PC-9 (cell line): ENCODE measurements at regions of chr19 and their contacts with region 1.

Region 1: DNA sequence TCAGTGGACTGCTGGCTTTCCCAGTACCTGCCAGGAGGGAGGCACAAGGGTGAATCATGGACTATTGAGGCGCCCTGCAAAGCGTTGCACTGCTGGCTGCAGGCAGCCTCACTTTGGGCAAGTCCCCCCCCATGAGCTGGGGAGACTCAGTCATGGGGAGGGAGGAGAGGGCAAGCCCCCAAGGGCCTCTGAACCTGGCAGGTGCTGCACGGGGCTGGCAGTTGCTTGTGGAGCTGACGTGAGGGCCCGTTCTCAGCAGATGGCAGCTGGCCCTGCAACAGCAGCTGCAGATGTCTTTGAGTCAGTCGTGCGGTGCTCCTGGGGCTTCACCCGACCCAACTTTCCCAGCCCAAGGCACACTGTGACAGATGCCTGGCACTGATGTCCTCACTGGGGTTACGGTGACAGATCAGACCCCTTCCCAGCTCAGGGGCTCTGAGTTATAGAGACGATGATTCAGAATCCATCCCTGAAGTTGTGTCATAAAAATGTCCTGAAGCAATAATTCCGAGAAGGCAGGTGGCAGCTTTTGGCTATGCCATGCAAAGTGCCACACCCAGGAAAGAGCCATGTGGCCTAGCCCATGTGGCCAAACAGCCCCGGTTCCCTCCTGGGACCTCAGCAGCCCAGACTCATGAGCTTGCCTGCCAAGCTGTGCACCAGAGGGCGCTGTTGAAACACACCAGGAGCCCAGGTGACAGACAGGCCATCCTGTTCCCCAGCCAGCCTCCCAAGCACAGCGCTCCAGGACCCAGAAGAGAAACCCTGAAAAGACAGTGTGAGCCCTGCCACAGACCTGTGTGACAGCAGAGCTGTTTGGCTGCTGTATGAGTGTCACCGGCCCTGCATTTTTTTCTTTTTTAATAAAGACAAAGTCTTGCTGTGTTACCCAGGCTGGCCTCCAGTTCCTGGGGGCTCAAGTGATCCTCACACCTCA is 53.6 kb upstream of the LDLR start:
- DNase-seq: peak; percentile 94 to 96
- H3K4me3 ChIP-seq: no peak overlapping the region
- H3K27ac ChIP-seq: peak overlapping the region; percentile 28
- H3K4me1 ChIP-seq: peaks cover 11% of the 10 kb centered on the region
- H3K27me3 ChIP-seq: no peaks in the 10 kb centered on the region
- CTCF ChIP-seq: peak; percentile 96

Region 2: DNA sequence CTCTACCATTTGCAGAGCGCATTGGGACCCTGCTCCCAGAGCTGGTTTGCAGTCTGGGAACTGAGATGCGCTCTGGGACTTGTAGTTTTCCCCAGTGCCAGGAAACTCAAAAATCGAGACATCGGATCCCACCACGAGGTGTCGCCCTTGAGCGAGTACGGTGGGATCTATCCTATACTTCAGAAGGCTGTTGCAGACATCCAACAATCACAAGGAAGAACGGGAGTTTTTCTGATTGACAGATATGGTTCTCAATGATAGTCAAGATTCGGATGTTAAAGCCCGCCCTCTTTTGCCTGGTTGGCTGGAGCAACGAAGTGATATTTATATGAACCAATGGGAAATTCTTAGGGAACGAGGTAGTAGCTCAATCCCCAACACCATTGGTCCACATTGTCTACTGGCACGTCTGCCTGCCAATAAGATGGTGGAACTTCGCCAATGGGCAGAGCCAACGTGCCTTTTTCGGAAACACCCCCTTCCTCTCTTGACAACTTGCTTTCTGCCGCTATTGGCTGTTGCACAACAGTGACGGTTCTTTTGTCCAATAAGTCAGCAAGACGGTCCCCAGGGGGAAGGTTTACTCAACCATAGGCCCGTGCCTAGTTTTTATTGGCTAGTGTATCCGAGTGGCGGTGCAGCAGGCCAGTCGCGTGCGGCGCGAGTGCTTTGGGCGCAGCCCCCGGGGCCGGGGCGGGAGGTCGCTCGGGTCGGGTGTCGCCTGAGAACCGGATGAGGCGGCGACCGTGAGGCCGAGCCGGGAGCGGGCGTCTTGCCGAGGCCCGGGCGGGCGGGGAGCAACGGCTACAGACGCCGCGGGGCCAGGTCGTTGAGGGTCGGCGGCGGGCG is 318.1 kb before region 1 on chr19 and contains the start of gene DNM2:
- CTCF ChIA-PET with region 1: no interaction called
- POLR2A ChIA-PET with region 1: no interaction called
- intact Hi-C with region 1: no loop called
- DNase-seq: peak; percentile 99 to 100
- H3K4me3 ChIP-seq: peak within 1 kb of the TSS; percentile 95
- H3K27ac ChIP-seq: no peak within 1 kb of the TSS
- H3K4me1 ChIP-seq: peaks cover 12% of the 10 kb centered on the region
- H3K27me3 ChIP-seq: no peaks in the 10 kb centered on the region
- CTCF ChIP-seq: peak; percentile 87
- total RNA-seq, gene DNM2: 169 and 188 TPM in 2 replicates

Region 3: GRCh38 chr19:11018179-11018578 is 17.5 kb before region 1 on chr19:
- CTCF ChIA-PET with region 1: no interaction called
- POLR2A ChIA-PET with region 1: no interaction called
- intact Hi-C with region 1: loop called (anchors 1 kb)
- DNase-seq: peak; percentile 47 to 86
- H3K4me3 ChIP-seq: no peak overlapping the region
- H3K27ac ChIP-seq: no peak overlapping the region
- H3K4me1 ChIP-seq: no peaks in the 10 kb centered on the region
- H3K27me3 ChIP-seq: no peaks in the 10 kb centered on the region
- CTCF ChIP-seq: no peak

Region 4: GRCh38 chr19:11079999-11080398 is 44.3 kb after region 1 on chr19:
- CTCF ChIA-PET with region 1: no interaction called
- POLR2A ChIA-PET with region 1: no interaction called
- intact Hi-C with region 1: no loop called
- DNase-seq: no peak
- H3K4me3 ChIP-seq: no peak overlapping the region
- H3K27ac ChIP-seq: no peak overlapping the region
- H3K4me1 ChIP-seq: peaks cover 15% of the 10 kb centered on the region
- H3K27me3 ChIP-seq: no peaks in the 10 kb centered on the region
- CTCF ChIP-seq: no peak

Region 5: DNA sequence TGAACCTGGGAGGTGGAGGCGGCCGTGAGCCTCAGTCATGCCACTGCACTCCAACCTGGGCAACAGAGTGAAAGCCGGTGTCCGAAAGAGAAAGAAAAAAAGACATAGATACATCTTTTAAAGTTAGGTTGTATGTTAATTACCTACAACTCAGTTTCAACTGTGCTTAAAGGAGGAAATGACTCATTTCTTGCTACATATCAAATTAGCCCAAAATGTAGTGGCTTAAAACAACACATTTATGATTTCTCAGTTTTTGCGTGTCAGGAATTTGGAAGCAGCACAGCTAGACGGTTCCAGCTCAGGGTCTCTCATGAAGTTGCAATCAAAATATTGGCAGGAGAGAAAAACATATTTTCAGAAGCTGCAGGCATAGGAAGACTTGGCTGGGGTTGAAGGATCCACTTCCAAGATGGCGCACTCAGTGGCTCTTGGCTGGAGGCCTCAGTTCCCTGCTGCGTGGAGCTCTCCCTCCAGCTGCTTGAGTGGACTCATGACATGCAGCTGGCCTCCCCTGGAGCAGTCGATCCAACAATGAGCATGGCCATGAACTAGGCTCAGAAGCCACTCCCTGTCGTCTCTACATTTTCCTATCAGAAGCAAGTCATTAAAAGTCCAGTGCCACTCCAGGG is 60.6 kb after region 1 on chr19:
- CTCF ChIA-PET with region 1: interaction called, 16 read pairs
- POLR2A ChIA-PET with region 1: interaction called, 3 read pairs
- intact Hi-C with region 1: loop called (anchors 1 kb)
- DNase-seq: peak in 1 of 2 experiments; percentile 58
- H3K4me3 ChIP-seq: no peak overlapping the region; the same call in 1 of the 2 replicates
- H3K27ac ChIP-seq: peak overlapping the region; percentile 98
- H3K4me1 ChIP-seq: peaks cover 55% of the 10 kb centered on the region
- H3K27me3 ChIP-seq: no peaks in the 10 kb centered on the region
- CTCF ChIP-seq: no peak

Region 6: DNA sequence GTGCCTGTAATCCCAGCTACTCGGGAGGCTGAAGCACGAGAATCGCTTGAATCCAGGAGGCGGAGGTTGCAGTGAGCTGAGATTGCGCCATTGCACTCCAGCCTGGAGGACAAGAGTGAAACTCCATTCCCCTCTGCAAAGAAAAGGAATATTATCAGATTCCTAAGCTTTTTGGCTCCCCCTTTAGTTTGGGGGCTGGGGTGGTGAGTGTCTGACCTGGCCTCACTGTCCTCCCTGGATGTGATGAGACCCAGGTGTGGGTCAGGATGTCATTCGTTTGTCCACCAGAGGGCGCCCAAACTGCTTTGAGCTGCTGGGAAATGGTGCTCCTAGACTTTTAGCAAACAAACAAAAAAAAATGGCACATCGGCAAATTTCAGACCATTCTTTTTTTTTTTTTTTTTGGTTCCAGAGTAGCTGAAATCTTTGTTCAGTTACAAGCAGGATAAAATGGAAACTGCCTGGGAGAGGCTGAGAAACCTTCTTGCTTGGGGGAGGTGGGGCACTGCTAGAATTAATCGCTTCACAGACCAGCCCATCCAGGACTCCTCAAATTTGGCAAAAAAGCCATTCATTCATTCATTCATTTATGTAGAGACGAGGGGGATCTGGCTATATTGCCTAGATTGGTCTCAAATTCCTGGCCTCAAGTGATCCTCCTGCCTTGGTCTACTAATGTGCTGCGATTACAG is 90.4 kb after region 1 on chr19:
- CTCF ChIA-PET with region 1: no interaction called
- POLR2A ChIA-PET with region 1: interaction called, 4 read pairs
- intact Hi-C with region 1: loop called (anchors 2 kb)
- DNase-seq: peak; percentile 64 to 72
- H3K4me3 ChIP-seq: no peak overlapping the region
- H3K27ac ChIP-seq: no peak overlapping the region
- H3K4me1 ChIP-seq: no peaks in the 10 kb centered on the region
- H3K27me3 ChIP-seq: no peaks in the 10 kb centered on the region
- CTCF ChIP-seq: peak; percentile 88

Region 7: GRCh38 chr19:11203194-11204075 is 167.7 kb after region 1 on chr19:
- CTCF ChIA-PET with region 1: interaction called, 9 read pairs
- POLR2A ChIA-PET with region 1: no interaction called
- intact Hi-C with region 1: loop called (anchors 1 kb)
- DNase-seq: peak; percentile 69 to 75
- H3K4me3 ChIP-seq: no peak overlapping the region
- H3K27ac ChIP-seq: no peak overlapping the region
- H3K4me1 ChIP-seq: peaks cover 18% of the 10 kb centered on the region
- H3K27me3 ChIP-seq: no peaks in the 10 kb centered on the region
- CTCF ChIP-seq: peak; percentile 94